BJ (cell line): ENCODE measurements at regions of chr17 and their contacts with region 1.

Region 1: GRCh38 chr17:40909351-40909750 is 24.3 kb upstream of the KRT20 start:
- DNase-seq: peak; percentile 83
- H3K4me3 ChIP-seq: no peak overlapping the region
- H3K27me3 ChIP-seq: no peaks in the 10 kb centered on the region
- CTCF ChIP-seq: peak; percentile 75

Region 2: DNA sequence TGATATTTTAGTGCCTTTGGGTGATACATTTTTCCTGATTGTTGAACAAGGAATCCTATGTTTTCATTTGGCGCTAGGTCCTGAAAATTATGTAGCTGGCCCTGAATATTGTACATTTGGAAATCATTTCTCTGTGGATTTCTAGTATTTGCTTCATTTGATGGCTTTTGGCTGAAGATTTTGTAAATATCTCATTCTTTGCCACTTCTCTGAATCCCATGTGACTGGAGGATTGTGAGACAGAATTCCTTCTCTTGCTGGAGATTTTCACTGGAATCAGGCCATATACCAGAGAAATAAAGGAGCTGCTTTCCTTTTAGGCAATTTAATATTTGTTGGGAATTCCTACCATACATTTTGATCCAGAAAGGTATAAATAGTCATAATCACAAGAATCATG is 118.2 kb before region 1 on chr17:
- CTCF ChIA-PET with region 1: no interaction called
- POLR2A ChIA-PET with region 1: no interaction called
- DNase-seq: no peak
- H3K4me3 ChIP-seq: no peak overlapping the region
- H3K27me3 ChIP-seq: peaks cover 12% of the 10 kb centered on the region
- CTCF ChIP-seq: no peak

Region 3: DNA sequence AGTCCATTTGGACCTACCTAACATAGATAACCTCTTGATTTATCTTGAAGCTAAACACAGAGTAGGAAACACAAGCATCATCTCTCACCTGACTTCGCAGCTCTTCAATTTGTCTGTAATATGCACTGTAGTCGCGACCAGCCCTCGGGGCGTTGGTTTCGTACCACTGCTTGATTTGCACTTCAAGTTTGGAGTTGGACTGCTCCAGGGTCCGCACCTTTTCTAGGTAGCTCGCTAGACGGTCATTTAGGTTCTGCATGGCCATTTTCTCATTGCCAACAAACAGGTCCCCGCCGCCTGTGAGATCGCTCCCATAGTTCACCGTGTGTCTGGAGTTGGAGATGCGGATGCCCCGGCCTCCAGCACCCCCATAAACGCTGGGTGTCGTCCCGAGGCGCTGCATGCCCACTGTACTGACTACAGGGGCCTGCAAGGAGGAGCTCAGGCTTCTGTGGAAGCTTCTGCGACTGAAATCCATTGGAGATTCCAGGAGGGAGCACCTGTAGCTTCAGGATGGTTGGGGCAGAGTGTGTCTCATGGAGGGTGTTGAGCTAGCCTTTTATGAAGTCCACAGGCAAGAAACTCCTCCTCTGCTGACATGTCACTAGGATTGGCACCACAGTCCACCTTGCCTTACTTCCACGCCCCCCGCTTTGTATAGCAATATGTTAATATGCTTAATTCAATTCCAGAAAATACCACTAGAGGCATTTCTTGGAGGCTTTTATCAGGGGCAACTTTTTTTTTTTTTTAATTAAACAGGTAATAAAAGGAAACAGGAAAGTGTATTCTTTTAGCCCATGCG is 24.4 kb before region 1 on chr17 and contains the start of gene KRT20:
- CTCF ChIA-PET with region 1: no interaction called
- POLR2A ChIA-PET with region 1: no interaction called
- DNase-seq: no peak
- H3K4me3 ChIP-seq: no peak within 1 kb of the TSS
- H3K27me3 ChIP-seq: no peaks in the 10 kb centered on the region
- CTCF ChIP-seq: peak; percentile 12; the same call in 1 of the 2 replicates
- polyA plus RNA-seq, gene KRT20: not detected in 2 replicates

Region 4: DNA sequence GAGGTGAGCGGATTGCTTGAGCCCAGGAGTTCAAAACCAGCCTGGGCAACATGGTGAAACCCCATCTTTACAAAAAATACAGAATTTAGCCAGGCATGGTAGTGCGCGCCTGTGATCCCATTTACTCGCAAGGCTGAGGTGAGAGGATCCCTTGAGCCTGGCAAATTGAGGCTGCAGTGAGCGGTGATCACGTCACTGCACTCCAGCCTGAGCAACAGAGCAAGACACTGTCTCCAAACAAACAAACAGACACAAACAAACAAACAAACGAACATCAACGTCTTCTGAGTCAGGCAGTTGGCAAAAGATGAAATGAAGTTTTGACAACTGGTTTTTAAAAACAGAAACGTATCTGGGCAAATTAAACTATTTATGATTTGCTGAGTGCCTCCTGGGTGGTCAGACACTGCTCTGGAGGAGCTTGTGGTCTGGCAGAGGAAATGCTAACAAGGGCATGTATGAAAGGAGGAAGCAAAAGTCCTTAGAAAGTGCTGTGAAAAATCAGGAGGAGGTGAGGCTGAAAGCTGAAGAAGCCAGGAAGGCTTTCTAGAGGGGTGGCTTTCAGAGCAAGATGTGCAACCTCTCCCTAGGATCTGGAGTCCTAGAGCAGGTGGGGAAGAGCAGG is 14.1 kb before region 1 on chr17:
- CTCF ChIA-PET with region 1: no interaction called
- POLR2A ChIA-PET with region 1: no interaction called
- DNase-seq: no peak
- H3K4me3 ChIP-seq: no peak overlapping the region
- H3K27me3 ChIP-seq: no peaks in the 10 kb centered on the region
- CTCF ChIP-seq: no peak

Region 5: GRCh38 chr17:41131979-41132378 is 222.6 kb after region 1 on chr17:
- CTCF ChIA-PET with region 1: no interaction called
- POLR2A ChIA-PET with region 1: interaction called, 10 read pairs
- DNase-seq: no peak
- H3K4me3 ChIP-seq: no peak overlapping the region
- H3K27me3 ChIP-seq: no peaks in the 10 kb centered on the region
- CTCF ChIP-seq: no peak

Region 6: GRCh38 chr17:41322094-41322902 is 412.9 kb after region 1 on chr17:
- CTCF ChIA-PET with region 1: interaction called, 28 read pairs
- POLR2A ChIA-PET with region 1: no interaction called
- DNase-seq: peak; percentile 38
- H3K4me3 ChIP-seq: no peak overlapping the region
- H3K27me3 ChIP-seq: no peaks in the 10 kb centered on the region
- CTCF ChIP-seq: peak; percentile 91